Tibial artery (tissue), 4 donors: ENCODE measurements at regions of chr11 and their contacts with region 1.

Region 1: DNA sequence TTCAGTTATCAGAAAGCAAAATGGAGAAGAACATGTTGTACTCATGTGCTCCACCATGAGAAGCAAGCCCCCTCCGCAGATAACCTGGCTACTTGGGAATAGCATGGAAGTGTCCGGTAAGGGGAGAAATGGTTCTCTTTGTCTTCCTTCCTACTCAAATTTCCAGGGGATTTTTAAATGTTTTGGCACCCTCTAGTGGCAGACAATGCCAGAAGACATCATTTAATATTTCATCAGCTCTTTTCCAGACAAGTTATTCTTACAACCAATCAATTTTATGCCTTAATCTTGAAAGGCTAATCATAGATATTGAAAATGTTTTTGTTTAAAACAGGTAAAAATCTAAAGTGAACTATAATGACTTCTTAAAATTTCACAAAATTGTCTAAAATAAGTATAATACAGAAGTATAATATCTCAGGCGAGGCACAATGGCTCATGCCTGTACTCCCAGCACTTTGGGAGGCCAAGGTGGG is 15.7 kb downstream of the CRTAM start:
- DNase-seq: peak in 1 of 2 donors; percentile 30
- H3K4me3 ChIP-seq: no peak overlapping the region
- H3K27ac ChIP-seq: no peak overlapping the region
- H3K4me1 ChIP-seq: no peaks in the 10 kb centered on the region
- H3K27me3 ChIP-seq: peaks cover 0 to 26% of the 10 kb centered on the region in 2 donors
- CTCF ChIP-seq: peak; percentile 61 to 62

Region 2: GRCh38 chr11:122628810-122629555 is 225.0 kb before region 1 on chr11:
- intact Hi-C with region 1: loop called (anchors 5 kb)
- DNase-seq: peak; percentile 77 to 79
- H3K4me3 ChIP-seq: no peak overlapping the region
- H3K27ac ChIP-seq: no peak overlapping the region
- H3K4me1 ChIP-seq: no peaks in the 10 kb centered on the region
- H3K27me3 ChIP-seq: peaks cover 0 to 28% of the 10 kb centered on the region in 2 donors
- CTCF ChIP-seq: peak; percentile 72 to 81

Region 3: GRCh38 chr11:122951211-122951610 is 97.2 kb after region 1 on chr11:
- intact Hi-C with region 1: no loop called
- DNase-seq: no peak
- H3K4me3 ChIP-seq: no peak overlapping the region
- H3K27ac ChIP-seq: no peak overlapping the region
- H3K4me1 ChIP-seq: no peaks in the 10 kb centered on the region
- H3K27me3 ChIP-seq: no peaks in the 10 kb centered on the region
- CTCF ChIP-seq: no peak

Region 4: DNA sequence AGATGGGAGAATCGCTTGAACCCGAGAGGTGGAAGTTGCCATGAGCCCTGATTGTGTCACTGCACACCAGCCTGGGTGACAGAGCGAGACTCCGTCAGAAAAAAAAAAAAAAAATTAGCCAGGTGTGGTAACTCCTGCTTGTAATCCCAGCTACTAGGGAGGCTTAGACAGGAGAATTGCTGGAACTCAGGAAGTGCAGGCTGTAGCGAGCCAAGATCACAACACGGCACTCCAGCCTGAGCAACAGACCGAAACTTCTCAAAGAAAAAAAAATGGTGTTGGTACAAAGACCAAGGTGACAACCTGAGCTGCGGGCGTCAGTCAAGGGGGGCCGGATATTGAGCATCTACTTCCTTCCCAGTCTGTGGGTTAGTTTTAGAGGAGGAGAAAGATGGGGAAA is 256.3 kb after region 1 on chr11:
- intact Hi-C with region 1: no loop called
- DNase-seq: no peak
- H3K4me3 ChIP-seq: no peak overlapping the region
- H3K27ac ChIP-seq: no peak overlapping the region
- H3K4me1 ChIP-seq: no peaks in the 10 kb centered on the region
- H3K27me3 ChIP-seq: peaks cover 0 to 6% of the 10 kb centered on the region in 2 donors
- CTCF ChIP-seq: no peak